Natural killer cell (primary cell): ENCODE measurements at regions of chr6 and their contacts with region 1.

Region 1: GRCh38 chr6:44265007-44265721 is at the start of gene NFKBIE:
- DNase-seq: peak; percentile 96 to 98
- ATAC-seq: peak; percentile 81 to 95 (median 86)
- H3K4me3 ChIP-seq: peak within 1 kb of the TSS; percentile 94
- H3K4me3 Mint-ChIP-seq: peak within 1 kb of the TSS; percentile 93
- H3K27ac ChIP-seq: peak within 1 kb of the TSS; percentile 92
- H3K27ac Mint-ChIP-seq: peak within 1 kb of the TSS; percentile 93 to 98
- H3K4me1 ChIP-seq: peaks cover 50% of the 10 kb centered on the region
- H3K4me1 Mint-ChIP-seq: peaks cover 19 to 49% of the 10 kb centered on the region in 2 donors
- H3K27me3 ChIP-seq: peaks cover 17% of the 10 kb centered on the region
- H3K27me3 Mint-ChIP-seq: peaks cover 11 to 15% of the 10 kb centered on the region in 2 donors
- CTCF ChIP-seq: peak; percentile 28
- total RNA-seq, gene NFKBIE: 44.9 to 61.5 (median 56.4) TPM

Region 2: DNA sequence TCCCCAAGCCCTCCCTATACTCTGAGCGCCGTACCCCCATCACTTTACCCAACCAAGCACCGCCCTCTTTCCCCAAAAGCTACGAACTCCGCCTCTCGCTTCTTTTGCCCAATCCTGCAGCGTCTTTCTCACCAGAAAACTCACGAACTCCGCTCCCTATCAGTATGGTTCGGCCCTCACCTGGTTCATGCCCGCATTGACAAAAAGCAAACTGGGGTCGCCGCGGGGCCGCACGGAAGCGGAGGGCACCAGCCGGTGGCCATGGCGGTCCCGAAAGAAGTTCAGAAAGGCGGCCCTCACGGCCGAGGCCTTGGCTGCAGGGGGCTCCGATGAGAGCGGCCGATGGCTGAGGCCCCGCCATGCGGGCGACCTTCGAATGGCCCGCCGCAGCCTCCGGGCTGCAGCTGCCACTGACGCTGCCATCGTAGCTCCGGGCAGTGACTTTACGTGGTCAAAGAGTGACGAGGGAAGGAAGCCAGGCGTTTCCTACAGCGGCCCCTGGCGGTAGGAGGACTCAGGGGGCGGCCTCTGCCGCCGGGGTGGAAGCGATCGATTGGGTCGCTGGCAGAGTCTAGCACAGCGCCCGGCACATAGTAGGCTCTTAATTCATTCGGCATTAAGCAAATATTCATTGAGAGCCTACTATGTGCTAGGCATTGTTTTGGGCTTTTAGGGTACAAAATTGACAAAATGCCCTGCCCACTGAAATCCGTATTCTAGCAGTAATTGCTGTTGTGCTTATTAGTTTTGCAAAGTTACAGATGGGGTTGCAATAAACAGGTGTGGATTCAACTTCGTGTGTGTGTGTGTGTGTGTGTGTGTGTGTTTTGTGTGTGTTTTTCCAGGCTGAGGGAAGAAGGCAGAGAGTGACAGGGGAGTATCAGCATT is 48.0 kb after region 1 on chr6 and contains the start of gene AARS2:
- intact Hi-C with region 1: loop called (anchors 1 kb)
- DNase-seq: peak; percentile 92 to 94
- ATAC-seq: peak; percentile 98
- H3K4me3 ChIP-seq: peak within 1 kb of the TSS; percentile 75
- H3K4me3 Mint-ChIP-seq: peak within 1 kb of the TSS; percentile 98
- H3K27ac ChIP-seq: peak within 1 kb of the TSS; percentile 67
- H3K27ac Mint-ChIP-seq: peak within 1 kb of the TSS; percentile 95 to 98
- H3K4me1 ChIP-seq: peaks cover 11% of the 10 kb centered on the region
- H3K4me1 Mint-ChIP-seq: peaks cover 18 to 31% of the 10 kb centered on the region in 2 donors
- H3K27me3 ChIP-seq: no peaks in the 10 kb centered on the region
- H3K27me3 Mint-ChIP-seq: peaks cover under 1 to 9% of the 10 kb centered on the region in 2 donors
- CTCF ChIP-seq: peak; percentile 99
- total RNA-seq, gene AARS2: 14.1 to 17.2 (median 14.2) TPM

Region 3: GRCh38 chr6:44338228-44339122 is 73.3 kb after region 1 on chr6:
- intact Hi-C with region 1: loop called (anchors 2 kb)
- DNase-seq: peak; percentile 37 to 84
- ATAC-seq: peak; percentile 77 to 91 (median 91)
- H3K4me3 ChIP-seq: no peak overlapping the region
- H3K4me3 Mint-ChIP-seq: no peak overlapping the region
- H3K27ac ChIP-seq: no peak overlapping the region
- H3K27ac Mint-ChIP-seq: no peak overlapping the region
- H3K4me1 ChIP-seq: no peaks in the 10 kb centered on the region
- H3K4me1 Mint-ChIP-seq: no peaks in the 10 kb centered on the region
- H3K27me3 ChIP-seq: peaks cover 5% of the 10 kb centered on the region
- H3K27me3 Mint-ChIP-seq: peaks cover 21 to 25% of the 10 kb centered on the region in 2 donors
- CTCF ChIP-seq: peak; percentile 61